Activated T-helper 2 cell treated with anti-CD3 and anti-CD28 coated beads, Interferon-gamma antibody, Interleukin-2, Interleukin-4, amounts not matched to agents 10 μg/mL and 5 μg/mL and 100 μg/mL, durations not matched to agents 14 hours and 24 hours and 36 hours (primary cell): ENCODE measurements at regions of chrX and their contacts with region 1.

Region 1: DNA sequence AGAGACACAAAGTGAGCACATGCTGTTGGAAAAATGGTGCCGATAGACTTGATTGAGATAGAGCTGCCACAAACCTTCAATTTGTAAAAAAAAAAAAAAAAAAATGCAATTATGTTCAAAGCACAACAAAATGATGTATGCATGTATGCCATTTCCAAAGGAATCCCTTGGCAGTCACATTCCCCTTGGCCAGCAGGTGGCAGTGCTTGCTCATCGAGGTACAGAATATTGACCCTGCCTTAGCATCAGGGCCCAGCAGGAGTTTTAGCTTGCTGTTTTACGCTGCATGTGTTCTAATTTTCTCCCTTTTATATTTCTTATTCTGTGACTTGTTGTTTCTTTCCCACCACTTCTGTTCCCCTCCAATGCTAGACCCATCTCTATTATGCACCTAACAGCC is 34.5 kb upstream of the CYBB start:
- DNase-seq: peak; percentile 62
- H3K4me3 Mint-ChIP-seq: no peak overlapping the region
- H3K27ac Mint-ChIP-seq: peak overlapping the region; percentile 14
- H3K4me1 Mint-ChIP-seq: peaks cover 19% of the 10 kb centered on the region
- H3K27me3 Mint-ChIP-seq: peaks cover 26% of the 10 kb centered on the region

Region 2: GRCh38 chrX:37685452-37686353 is 59.7 kb before region 1 on chrX and contains the start of gene XK:
- intact Hi-C with region 1: loop called (anchors 5 kb)
- DNase-seq: peak; percentile 26
- H3K4me3 Mint-ChIP-seq: peak within 1 kb of the TSS; percentile 66
- H3K27ac Mint-ChIP-seq: no peak within 1 kb of the TSS
- H3K4me1 Mint-ChIP-seq: peaks cover 2% of the 10 kb centered on the region
- H3K27me3 Mint-ChIP-seq: peaks cover 2% of the 10 kb centered on the region
- total RNA-seq, gene XK: 0.32 and 0.34 TPM in 2 replicates

Region 3: DNA sequence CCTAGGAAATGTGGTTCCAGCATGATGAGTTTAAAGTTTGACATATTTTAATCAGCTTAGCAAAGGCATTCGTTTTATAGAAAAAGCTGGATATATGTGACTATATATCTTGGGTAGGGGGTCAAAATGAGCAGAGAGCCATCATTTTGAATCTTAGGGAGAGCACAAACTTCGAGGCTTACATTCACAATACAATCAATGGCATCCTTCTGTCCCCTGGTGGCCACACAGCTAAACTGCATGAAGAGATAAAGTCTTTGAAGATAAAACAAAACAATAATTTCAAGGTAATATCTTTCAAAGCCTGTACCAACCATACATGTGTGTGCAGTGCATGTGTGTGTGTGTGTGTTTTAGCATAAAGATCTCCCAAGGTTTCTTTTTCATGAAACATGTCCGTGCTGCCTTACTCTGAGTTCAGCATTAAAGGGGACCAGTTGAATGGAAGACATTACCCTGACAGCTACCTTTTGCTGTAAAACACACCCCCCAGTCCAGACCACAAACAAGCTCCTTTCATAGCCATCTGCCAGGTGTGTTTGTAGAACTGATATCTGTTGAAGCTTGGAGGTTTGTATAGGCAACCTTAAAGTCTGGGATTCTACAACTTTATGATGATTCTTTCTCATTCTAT is 80.0 kb after region 1 on chrX:
- intact Hi-C with region 1: loop called (anchors 1 kb)
- DNase-seq: peak; percentile 20
- H3K4me3 Mint-ChIP-seq: no peak overlapping the region
- H3K27ac Mint-ChIP-seq: no peak overlapping the region
- H3K4me1 Mint-ChIP-seq: peaks cover 20% of the 10 kb centered on the region
- H3K27me3 Mint-ChIP-seq: no peaks in the 10 kb centered on the region

Region 4: GRCh38 chrX:37976153-37976552 is 230.8 kb after region 1 on chrX:
- intact Hi-C with region 1: loop called (anchors 5 kb)
- DNase-seq: no peak
- H3K4me3 Mint-ChIP-seq: no peak overlapping the region
- H3K27ac Mint-ChIP-seq: no peak overlapping the region
- H3K4me1 Mint-ChIP-seq: peaks cover 14% of the 10 kb centered on the region
- H3K27me3 Mint-ChIP-seq: peaks cover 7% of the 10 kb centered on the region

Region 5: DNA sequence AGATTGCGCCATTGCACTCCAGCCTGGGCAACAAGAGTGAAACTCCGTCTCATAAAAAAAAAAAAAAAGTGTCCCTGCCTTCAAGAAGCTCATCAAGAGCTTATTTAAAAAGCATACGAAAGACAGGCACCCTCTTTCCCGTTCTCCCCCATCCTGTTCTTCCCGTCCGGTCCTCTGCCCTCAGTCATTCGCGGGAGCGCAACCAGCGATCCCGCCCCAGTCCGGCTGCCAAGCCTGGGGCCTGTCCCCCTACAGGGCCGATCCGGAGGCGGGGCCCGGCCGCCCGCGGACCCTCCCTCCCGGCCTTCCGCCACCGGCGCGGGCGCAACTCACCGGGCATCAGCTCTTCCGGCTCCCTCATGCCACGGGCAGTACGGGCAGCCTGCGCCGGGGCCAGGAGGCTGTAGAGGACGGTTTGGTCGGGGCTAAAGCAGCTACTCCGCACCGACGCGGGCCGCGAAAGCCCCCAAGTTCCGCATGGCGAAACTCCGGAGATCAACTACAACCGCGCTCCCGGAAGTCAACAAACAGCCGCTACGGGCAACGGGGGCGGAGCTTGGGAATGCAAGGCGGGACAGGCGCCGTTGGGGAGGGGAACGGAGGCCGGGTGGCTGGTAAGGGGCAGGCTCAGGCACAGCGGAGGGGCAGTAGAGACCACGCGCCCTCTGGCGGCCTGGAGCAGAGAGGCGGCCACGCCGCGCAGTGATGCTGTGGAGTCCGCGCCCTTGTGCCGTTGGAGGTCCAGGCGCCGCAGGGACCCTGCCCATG is 581.8 kb after region 1 on chrX and contains the start of gene RPGR:
- intact Hi-C with region 1: loop called (anchors 5 kb)
- DNase-seq: peak; percentile 87
- H3K4me3 Mint-ChIP-seq: peak within 1 kb of the TSS; percentile 89
- H3K27ac Mint-ChIP-seq: peak within 1 kb of the TSS; percentile 91
- H3K4me1 Mint-ChIP-seq: peaks cover 24% of the 10 kb centered on the region
- H3K27me3 Mint-ChIP-seq: no peaks in the 10 kb centered on the region
- total RNA-seq, gene RPGR: 7.3 and 7.7 TPM in 2 replicates

Region 6: DNA sequence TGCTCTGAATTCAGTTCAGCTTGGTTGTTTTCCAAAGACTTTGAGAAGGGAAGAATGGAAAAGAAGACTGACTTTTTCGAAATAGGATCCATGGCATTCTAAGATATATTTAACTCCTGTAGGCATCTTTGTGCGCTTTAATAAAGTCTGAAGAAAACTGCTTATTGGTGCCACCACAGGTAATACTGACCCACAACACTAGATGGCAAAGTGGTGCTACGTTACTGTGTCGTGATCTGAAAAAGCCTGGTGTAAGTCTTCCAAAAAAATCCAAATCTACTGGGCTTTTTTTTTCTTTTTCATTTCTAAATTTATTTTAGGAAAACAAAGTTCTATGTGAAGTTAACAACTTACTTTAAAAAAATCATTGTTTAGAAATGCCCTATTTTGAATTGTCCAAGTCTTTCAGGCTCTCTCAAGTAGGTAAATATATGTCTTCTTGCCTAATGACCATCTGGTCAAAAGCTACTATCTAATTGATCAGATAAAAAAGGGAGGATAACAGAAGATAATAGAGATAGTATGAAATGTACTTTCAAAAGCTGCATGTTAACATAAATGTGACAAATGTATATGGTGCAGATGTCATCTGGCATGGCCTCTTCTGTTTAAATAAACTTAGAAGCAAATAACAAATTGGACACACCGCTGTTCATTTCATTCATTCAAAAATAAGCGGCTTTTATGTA is 1008.9 kb after region 1 on chrX:
- intact Hi-C with region 1: no loop called
- DNase-seq: no peak
- H3K4me3 Mint-ChIP-seq: no peak overlapping the region
- H3K27ac Mint-ChIP-seq: no peak overlapping the region
- H3K4me1 Mint-ChIP-seq: no peaks in the 10 kb centered on the region
- H3K27me3 Mint-ChIP-seq: no peaks in the 10 kb centered on the region